CD4-positive, alpha-beta T cell (primary cell): ENCODE measurements at regions of chr2 and their contacts with region 1.

Region 1: GRCh38 chr2:241859436-241860183 is 916 bp upstream of the PDCD1 start:
- DNase-seq: peak in 6 of 14 experiments; percentile 44 to 60 (median 52)
- ATAC-seq: peak; percentile 25
- H3K4me3 ChIP-seq: peak overlapping the region; percentile 71
- H3K4me3 Mint-ChIP-seq: peak overlapping the region; percentile 87
- H3K27ac ChIP-seq: peak overlapping the region in 1 of 2 donors; percentile 61
- H3K27ac Mint-ChIP-seq: peak overlapping the region; percentile 81
- H3K4me1 ChIP-seq: peaks cover 95% of the 10 kb centered on the region
- H3K4me1 Mint-ChIP-seq: peaks cover 45% of the 10 kb centered on the region
- H3K27me3 ChIP-seq: peaks cover 0 to 6% of the 10 kb centered on the region in 2 experiments
- H3K27me3 Mint-ChIP-seq: peaks cover 30% of the 10 kb centered on the region
- CTCF ChIP-seq: no peak

Region 2: DNA sequence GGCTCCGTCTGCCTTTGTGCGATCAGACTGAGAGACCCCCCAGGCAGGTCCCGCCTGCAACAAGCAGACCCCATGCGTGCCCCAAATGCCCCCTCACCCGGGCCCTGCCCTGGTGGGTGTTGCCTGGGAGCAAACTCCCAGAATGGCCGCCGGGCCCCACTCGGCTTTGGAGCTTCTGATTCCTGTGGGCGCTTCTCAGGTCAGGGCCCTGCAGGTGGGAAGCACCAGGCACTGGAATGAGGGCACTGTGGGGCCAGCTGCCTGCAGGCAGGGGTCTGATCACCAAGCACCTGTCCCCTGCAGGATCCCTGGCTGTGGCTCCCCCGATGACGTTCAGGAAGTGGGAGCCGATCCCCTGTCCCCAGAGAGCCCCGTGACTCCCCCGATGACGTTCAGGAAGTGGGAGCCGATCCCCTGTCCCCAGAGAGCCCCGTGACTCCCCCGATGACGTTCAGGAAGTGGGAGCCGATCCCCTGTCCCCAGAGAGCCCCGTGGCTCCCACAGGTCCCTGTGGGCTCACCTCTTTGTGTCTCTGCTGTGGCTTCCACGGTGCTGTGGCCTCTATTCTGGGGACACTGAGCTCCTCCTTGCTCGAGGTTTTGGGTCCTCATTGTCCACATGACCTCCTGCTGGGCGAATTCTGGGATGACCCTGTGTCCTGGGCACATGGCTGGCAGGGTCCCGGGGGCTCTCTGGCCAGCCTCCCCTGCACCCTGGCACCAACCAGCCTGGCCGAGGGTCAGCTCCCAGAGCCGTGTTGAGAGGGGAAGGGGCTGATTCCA is 45.9 kb before region 1 on chr2:
- CTCF ChIA-PET with region 1: no interaction called
- POLR2A ChIA-PET with region 1: no interaction called
- intact Hi-C with region 1: loop called in 1 of 2 experiments (anchors 10 kb)
- DNase-seq: peak in 5 of 14 experiments; percentile 25 to 80 (median 49)
- ATAC-seq: peak; percentile 83
- H3K4me3 ChIP-seq: no peak overlapping the region
- H3K4me3 Mint-ChIP-seq: peak overlapping the region; percentile 11
- H3K27ac ChIP-seq: no peak overlapping the region
- H3K27ac Mint-ChIP-seq: peak overlapping the region; percentile 44
- H3K4me1 ChIP-seq: peaks cover 28% of the 10 kb centered on the region
- H3K4me1 Mint-ChIP-seq: peaks cover 5% of the 10 kb centered on the region
- H3K27me3 ChIP-seq: no peaks in the 10 kb centered on the region
- H3K27me3 Mint-ChIP-seq: peaks cover 6% of the 10 kb centered on the region
- CTCF ChIP-seq: no peak

Region 3: DNA sequence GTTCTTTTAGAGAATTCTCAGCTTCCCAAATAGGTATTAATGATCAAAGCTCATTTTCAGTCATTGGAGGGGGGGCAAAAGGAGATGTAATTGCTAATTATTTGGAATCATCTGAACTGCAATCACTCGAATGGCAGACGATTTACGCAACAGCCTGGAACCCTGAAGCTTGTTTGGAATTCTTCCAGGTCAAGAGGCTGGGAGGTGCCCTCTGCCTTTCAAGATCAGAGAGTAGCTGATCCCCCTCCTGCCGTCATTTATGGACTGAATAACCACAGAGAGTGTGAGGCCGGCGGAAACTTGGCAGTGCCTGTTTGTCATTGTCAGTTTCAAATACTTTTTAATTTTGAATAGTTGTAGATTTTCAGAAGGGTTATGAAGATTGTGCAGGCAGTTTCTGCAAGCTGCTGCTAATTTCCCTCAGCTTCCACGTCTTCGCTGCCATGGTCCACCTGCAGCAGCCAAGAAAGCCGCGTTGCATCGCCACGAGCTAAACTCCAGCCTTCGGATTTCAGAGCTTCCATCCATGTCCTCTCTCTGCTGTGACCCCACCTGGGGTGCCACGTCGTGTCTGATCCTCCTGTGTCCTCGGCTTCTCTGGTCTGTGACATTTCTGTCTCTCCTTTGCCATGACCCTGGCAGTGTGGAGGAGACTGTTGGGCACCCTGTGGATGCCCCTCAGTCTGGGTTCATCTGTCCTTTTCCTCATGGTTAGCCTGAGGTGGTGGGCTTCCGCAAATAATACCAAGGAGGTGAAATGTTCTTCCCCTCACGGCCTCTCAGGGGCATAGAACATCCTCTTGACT is 116.5 kb after region 1 on chr2:
- CTCF ChIA-PET with region 1: no interaction called
- POLR2A ChIA-PET with region 1: no interaction called
- intact Hi-C with region 1: no loop called
- DNase-seq: no peak
- ATAC-seq: no peak
- H3K4me3 ChIP-seq: no peak overlapping the region
- H3K4me3 Mint-ChIP-seq: no peak overlapping the region
- H3K27ac ChIP-seq: no peak overlapping the region
- H3K27ac Mint-ChIP-seq: no peak overlapping the region
- H3K4me1 ChIP-seq: no peaks in the 10 kb centered on the region
- H3K4me1 Mint-ChIP-seq: no peaks in the 10 kb centered on the region
- H3K27me3 ChIP-seq: no peaks in the 10 kb centered on the region
- H3K27me3 Mint-ChIP-seq: no peaks in the 10 kb centered on the region
- CTCF ChIP-seq: no peak